ENCODE measurements at regions of chr22 and their contacts with region 1.

Region 1: DNA sequence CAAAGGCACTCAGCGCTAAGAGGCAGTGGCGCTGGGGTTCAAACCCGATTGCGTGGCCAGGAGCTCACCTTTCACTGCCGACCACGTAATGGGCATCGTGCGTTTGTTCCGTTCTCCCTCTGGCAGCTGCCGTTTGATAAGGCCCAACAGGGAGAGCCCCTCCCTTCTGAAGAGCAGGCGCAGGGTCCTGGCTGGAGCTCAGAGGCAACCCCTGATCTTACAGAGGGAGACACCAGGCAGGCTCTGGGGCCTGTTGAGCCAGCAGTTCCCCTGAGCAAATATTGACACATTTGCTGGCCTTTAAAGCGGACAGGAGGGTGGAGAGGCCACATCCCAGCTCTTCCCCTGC is 11.7 kb upstream of the C1QTNF6 start:
- DNase-seq: no peak
- CTCF ChIP-seq: peak; percentile 21

Region 2: DNA sequence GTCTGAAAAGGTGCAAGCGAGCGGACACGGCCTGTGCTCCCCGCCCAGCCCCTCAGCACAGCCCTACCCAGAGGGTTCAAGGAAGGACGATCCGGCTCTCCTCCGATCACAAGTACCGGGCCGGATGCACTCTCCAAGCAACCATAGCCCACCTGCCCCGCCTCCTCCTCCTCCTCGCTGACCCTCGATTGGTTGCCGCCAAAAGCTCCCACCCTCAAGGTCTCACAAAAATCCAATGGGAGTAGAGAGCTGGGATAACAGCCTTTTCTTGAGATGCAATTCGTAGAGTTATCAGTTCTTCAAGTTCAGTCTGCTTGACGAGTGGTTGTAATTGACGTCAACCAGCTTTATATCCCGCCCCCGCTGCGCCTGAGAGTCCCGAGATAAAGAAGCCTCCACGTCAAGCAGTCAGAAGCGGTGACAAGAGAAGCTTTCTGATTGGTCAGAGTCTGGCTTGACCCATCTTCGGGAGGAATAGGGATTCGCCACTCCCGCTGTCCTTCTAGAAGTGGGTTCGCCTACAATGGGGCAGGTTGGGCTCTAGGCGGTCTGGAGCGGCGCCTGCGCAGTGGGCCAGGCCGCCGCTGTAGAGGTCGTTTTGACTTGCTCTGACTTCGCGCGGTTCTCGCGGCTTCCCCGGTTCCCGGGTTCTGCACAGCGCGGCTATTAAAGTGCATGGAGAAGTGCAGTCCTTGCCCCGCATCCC is 423.6 kb before region 1 on chr22 and contains the start of gene IFT27:
- in situ Hi-C with region 1: loop called (anchors 10 kb)
- DNase-seq: peak; percentile 99
- CTCF ChIP-seq: no peak

Region 3: GRCh38 chr22:37121887-37122591 is 77.7 kb before region 1 on chr22:
- in situ Hi-C with region 1: no loop called
- DNase-seq: peak; percentile 86
- CTCF ChIP-seq: no peak